ENCODE measurements at regions of chr10 and their contacts with region 1.

Region 1: GRCh38 chr10:72260588-72261322 is 13.0 kb upstream of the DDIT4 start:
- DNase-seq: peak; percentile 95
- H3K4me3 Mint-ChIP-seq: peak overlapping the region; percentile 84
- H3K27ac Mint-ChIP-seq: peak overlapping the region; percentile 99
- H3K4me1 Mint-ChIP-seq: peaks cover 60% of the 10 kb centered on the region
- H3K27me3 Mint-ChIP-seq: peaks cover 2% of the 10 kb centered on the region

Region 2: GRCh38 chr10:72080042-72080975 is 180.4 kb before region 1 on chr10:
- CTCF ChIA-PET with region 1: no interaction called
- POLR2A ChIA-PET with region 1: no interaction called
- intact Hi-C with region 1: loop called (anchors 5 kb)
- DNase-seq: no peak
- H3K4me3 Mint-ChIP-seq: peak overlapping the region; percentile 1
- H3K27ac Mint-ChIP-seq: peak overlapping the region; percentile 86
- H3K4me1 Mint-ChIP-seq: peaks cover 92% of the 10 kb centered on the region
- H3K27me3 Mint-ChIP-seq: no peaks in the 10 kb centered on the region

Region 3: DNA sequence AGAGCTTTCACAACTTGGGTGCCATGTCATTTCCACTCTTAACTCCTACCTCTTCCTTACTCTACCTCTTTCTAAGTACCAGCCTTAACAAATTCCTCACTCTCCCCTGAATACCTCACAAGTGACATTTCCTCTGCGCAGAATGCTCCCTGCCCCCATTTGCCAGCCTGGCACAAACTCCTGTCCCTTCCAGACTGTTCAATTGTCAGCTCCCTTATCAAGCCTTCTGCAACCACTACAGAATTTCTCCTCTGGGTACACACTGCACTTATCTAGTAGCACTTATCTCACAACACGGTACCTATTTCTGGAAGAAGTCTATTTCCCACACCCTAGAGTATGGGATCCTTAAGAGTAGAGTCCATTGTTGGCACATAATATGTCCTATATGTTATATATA is 84.1 kb before region 1 on chr10:
- CTCF ChIA-PET with region 1: no interaction called
- POLR2A ChIA-PET with region 1: no interaction called
- intact Hi-C with region 1: no loop called
- DNase-seq: no peak
- H3K4me3 Mint-ChIP-seq: no peak overlapping the region
- H3K27ac Mint-ChIP-seq: no peak overlapping the region
- H3K4me1 Mint-ChIP-seq: peaks cover 10% of the 10 kb centered on the region
- H3K27me3 Mint-ChIP-seq: no peaks in the 10 kb centered on the region

Region 4: GRCh38 chr10:72248468-72249151 is 12.1 kb before region 1 on chr10:
- CTCF ChIA-PET with region 1: interaction called, 17 read pairs
- POLR2A ChIA-PET with region 1: interaction called, 37 read pairs
- intact Hi-C with region 1: loop called (anchors 1 kb)
- DNase-seq: peak; percentile 84
- H3K4me3 Mint-ChIP-seq: peak overlapping the region; percentile 83
- H3K27ac Mint-ChIP-seq: peak overlapping the region; percentile 98
- H3K4me1 Mint-ChIP-seq: peaks cover 74% of the 10 kb centered on the region
- H3K27me3 Mint-ChIP-seq: no peaks in the 10 kb centered on the region

Region 5: DNA sequence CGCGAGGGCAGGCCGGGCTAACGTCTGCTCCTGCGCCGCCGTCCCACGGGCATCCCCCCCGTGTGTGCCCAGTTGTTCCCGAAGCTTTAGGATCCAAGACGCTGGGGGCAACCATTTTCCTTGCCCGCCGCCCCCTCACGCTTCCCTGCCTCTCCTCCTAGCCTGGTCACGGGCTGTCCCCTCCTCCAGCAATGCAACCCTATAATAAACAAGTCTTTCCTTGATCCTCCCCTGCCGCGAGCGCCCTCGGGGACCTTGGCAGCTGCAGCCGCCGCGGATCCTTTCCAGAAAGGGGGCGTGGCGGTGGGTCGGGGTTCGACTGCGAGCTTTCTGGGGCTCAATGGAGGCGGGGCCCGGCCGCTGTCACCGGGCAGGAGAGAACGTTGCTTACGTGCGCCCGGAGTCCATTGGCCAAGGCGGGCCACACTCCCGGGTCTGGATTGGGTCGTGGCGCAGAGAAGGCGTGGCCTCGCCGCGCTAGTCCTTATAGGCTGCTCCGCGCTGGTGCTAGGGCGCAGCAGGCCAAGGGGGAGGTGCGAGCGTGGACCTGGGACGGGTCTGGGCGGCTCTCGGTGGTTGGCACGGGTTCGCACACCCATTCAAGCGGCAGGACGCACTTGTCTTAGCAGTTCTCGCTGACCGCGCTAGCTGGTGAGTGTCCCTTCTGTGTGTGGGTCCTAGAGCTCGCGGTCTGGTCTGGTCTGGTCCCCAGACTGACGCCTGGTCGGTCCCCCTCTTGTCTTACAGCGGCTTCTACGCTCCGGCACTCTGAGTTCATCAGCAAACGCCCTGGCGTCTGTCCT is 12.9 kb after region 1 on chr10 and contains the start of gene DDIT4:
- CTCF ChIA-PET with region 1: interaction called, 43 read pairs
- POLR2A ChIA-PET with region 1: interaction called, 142 read pairs
- intact Hi-C with region 1: loop called (anchors 1 kb)
- DNase-seq: peak; percentile 99
- H3K4me3 Mint-ChIP-seq: peak within 1 kb of the TSS; percentile 99
- H3K27ac Mint-ChIP-seq: peak within 1 kb of the TSS; percentile 97
- H3K4me1 Mint-ChIP-seq: peaks cover 46% of the 10 kb centered on the region
- H3K27me3 Mint-ChIP-seq: peaks cover 5% of the 10 kb centered on the region
- total RNA-seq, gene DDIT4: 637 TPM

Region 6: DNA sequence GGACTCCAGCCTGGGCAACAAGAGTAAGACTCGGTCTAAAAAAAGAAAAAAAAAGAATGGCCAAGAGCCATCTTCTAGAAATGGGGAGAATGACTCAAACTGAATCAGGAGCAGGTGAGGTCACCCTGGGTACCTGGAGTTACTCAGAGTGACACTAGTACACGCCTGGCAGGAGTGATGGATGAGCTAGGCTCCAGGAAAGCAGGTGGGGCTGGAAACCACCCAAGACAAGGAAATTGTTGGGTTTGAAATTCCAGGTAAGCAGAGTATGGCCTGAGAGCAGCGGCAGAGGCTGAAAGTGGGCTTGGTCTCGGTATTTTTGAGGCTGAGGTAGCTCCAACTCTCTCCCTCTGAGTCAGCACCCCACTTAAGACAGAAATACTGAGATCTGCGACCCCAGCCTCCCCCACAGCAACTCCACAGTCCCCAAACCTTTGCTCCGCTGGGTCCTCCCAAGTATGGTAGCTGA is 31.5 kb after region 1 on chr10:
- CTCF ChIA-PET with region 1: interaction called, 15 read pairs
- POLR2A ChIA-PET with region 1: interaction called, 41 read pairs
- intact Hi-C with region 1: loop called (anchors 1 kb)
- DNase-seq: peak; percentile 89
- H3K4me3 Mint-ChIP-seq: no peak overlapping the region
- H3K27ac Mint-ChIP-seq: peak overlapping the region; percentile 100
- H3K4me1 Mint-ChIP-seq: peaks cover 59% of the 10 kb centered on the region
- H3K27me3 Mint-ChIP-seq: peaks cover 3% of the 10 kb centered on the region

Region 7: DNA sequence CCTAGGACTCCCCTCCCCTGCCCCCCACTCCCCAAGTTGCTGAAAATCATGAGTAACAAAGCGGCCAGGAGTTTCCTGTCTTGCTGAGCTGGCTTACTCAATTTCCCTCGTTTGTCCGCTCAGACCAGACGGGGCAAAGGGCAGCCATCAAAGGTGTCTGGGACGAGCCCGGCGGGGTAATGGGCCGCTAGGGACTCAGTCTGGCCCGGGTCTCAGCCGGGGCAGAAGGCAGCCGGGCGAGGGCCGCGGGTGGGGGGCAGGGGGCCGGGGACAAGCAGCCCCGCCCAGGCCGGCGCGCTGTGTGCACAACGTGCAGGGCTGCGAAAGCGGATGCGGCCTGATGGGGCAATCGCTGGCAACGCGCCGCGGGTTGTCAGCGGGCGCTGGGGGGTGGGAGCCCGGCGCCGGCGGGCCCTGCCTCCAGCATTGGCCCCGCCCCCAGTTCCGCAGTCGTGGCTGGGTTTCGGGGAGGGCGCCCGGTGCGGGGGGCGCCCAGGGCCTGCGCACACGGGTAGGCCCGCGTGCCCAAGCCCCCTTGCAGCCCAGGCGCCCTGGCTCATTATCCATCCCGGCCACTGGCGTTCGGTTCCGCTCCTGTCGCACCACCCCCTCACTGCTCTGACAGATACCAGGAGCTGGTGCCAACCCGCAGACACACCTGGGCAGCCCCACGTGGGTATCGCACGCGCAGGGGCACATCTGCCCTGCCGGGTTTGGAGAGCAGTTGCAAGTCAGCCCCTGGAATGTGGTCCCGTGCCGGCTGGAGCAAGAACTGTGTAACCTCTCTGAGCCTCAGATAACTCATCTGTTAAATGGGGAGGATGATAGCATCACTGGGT is 58.9 kb after region 1 on chr10:
- CTCF ChIA-PET with region 1: no interaction called
- POLR2A ChIA-PET with region 1: interaction called, 35 read pairs
- intact Hi-C with region 1: loop called (anchors 1 kb)
- DNase-seq: peak; percentile 93
- H3K4me3 Mint-ChIP-seq: peak overlapping the region; percentile 85
- H3K27ac Mint-ChIP-seq: peak overlapping the region; percentile 100
- H3K4me1 Mint-ChIP-seq: peaks cover 79% of the 10 kb centered on the region
- H3K27me3 Mint-ChIP-seq: no peaks in the 10 kb centered on the region